GM18951 (cell line): ENCODE measurements at regions of chr3 and their contacts with region 1.

Region 1: GRCh38 chr3:132253262-132253878 is 63.8 kb upstream of the ACP3 start:
- POLR2A ChIP-seq: no peak

Region 2: GRCh38 chr3:131306242-131306641 is 947.1 kb before region 1 on chr3:
- in situ Hi-C with region 1: no loop called
- POLR2A ChIP-seq: no peak

Region 3: DNA sequence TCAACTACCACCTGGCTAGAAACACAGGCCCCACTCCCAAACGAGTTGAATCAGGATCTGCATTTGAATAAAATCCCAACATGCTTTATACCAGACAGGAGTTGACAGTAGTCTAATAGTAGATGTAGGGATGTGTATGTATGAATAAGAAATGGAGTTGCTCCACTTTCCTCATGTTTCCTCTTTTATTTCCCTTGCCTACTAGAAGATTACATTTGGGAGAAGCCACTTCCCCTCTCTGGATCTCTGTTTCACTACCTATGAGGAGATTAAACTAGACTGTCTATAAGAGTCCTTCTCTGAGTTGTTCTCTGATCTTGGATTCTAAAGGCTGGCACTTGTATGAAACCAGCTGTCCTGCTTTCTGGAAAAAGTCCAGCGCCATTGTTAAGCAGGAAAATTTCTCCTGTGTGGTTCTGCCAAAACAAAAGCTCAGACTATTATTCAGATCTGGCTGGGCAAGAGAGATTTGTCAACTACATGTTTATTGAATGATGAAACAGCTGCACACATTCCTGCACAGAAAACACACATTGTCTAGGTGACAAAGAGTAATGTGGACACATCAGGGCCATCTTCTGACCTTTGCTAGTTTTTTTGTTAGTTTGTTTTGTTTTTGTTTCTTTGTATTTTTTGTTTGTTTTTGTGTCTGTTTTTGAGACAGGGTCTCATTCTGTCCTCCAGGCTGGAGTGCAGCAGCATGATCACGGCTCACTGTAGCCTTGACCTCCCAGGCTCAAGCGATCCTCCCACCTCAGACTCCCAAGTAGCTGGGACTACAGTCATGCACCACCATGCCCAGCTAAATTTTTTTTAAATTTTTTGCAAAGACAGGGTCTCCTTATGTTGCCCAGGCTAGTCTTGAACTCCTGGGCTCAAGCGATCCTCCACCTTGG is 93.7 kb after region 1 on chr3:
- in situ Hi-C with region 1: loop called (anchors 5 kb)
- POLR2A ChIP-seq: no peak

Region 4: GRCh38 chr3:132641837-132642538 is 388.6 kb after region 1 on chr3:
- in situ Hi-C with region 1: loop called (anchors 25 kb)
- POLR2A ChIP-seq: no peak